Activated T-helper 1 cell treated with anti-CD3 and anti-CD28 coated beads, Interleukin-12 subunit alpha, Interleukin-12 subunit beta, Interleukin-2, Interleukin-4 antibody, amounts not matched to agents 30 ng/mL and 10 ng/mL and 1 ng/mL, durations not matched to agents 14 hours and 24 hours and 36 hours (primary cell): ENCODE measurements at regions of chr17 and their contacts with region 1.

Region 1: DNA sequence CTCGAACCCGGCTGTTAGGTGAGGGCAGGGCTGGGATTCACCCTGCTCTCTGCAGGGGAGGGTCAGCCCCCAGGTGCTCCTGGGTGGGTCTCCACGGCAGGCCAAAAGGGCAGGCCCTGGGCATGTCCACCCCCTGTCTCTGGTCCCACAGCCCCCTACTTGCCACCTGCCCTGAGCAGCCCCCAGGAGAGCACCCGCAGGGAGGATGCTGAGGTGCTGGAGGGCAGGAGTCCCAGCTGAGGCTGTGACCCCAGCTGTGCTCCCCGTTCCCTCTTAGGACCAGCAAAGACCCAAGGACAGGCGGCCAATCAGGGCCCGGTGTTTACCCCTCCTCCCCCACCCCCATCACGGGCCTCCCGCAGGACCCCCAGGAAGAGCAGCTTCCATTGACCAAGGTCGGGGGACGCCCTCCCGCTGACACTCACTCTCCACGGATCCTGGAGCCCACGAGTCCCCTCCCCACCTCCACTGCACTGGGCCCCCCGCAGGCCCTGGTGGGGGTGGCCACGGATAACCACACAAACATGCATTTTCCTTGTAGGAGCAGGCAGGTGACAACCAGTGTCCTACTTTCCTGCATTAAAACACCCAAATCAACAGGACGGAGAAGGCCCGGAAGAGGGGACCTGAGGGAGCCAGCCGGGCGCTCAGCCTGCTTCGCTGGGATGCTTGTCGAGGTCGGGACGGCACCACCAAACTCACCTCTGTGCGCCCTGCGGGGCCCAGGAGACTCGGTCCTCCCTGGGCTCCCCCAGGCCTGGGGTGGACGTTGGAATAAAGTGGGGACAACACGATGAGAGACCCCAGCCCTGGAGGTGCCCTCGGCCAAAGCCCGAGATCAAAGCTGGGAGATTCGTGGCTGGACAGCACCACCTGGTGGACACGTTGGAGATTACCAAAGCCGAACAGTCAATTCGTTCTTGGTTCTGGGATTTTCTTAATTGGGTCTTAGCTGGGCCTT is 22.5 kb upstream of the ENPP7 start:
- DNase-seq: peak; percentile 38
- H3K4me3 Mint-ChIP-seq: no peak overlapping the region
- H3K27ac Mint-ChIP-seq: no peak overlapping the region
- H3K4me1 Mint-ChIP-seq: no peaks in the 10 kb centered on the region
- H3K27me3 Mint-ChIP-seq: no peaks in the 10 kb centered on the region

Region 2: GRCh38 chr17:79400989-79401703 is 307.1 kb before region 1 on chr17:
- intact Hi-C with region 1: loop called (anchors 1 kb)
- DNase-seq: peak; percentile 59
- H3K4me3 Mint-ChIP-seq: peak overlapping the region; percentile 77
- H3K27ac Mint-ChIP-seq: no peak overlapping the region
- H3K4me1 Mint-ChIP-seq: peaks cover 12% of the 10 kb centered on the region
- H3K27me3 Mint-ChIP-seq: peaks cover 13% of the 10 kb centered on the region